Activated CD4-positive, alpha-beta T cell treated with anti-CD3 and anti-CD28 coated beads, Interleukin-2, amount 10 ng/mL, durations not matched to agents 7 days and 5 days (primary cell): ENCODE measurements at regions of chr4 and their contacts with region 1.

Region 1: GRCh38 chr4:54233277-54233696 is 4.2 kb downstream of the PDGFRA start:
- DNase-seq: peak; percentile 74
- H3K4me3 Mint-ChIP-seq: peak overlapping the region; percentile 53
- H3K27ac Mint-ChIP-seq: no peak overlapping the region
- H3K4me1 Mint-ChIP-seq: peaks cover 19% of the 10 kb centered on the region
- H3K27me3 Mint-ChIP-seq: peaks cover 67% of the 10 kb centered on the region

Region 2: DNA sequence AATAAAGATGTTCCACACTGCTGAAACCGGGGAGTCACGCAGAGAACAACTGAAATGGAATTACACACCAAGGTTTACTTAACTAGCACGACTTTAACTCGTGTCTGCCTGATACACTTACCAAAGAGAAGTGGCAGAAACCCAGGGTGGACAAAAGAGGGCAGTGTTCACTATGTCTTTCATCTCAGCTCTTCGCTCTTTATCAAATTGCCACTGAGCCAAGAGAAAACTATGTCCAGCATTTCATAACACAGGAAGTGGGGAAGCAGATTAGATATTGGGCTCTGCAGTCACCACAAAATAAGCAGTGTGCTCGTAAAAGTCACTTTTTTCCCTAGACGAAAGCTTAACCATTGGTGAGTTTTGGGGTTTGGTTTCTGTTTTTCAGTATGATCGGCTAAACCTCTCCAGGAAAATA is 324.6 kb before region 1 on chr4:
- CTCF ChIA-PET with region 1: interaction called, 23 read pairs
- POLR2A ChIA-PET with region 1: no interaction called
- DNase-seq: peak; percentile 33
- H3K4me3 Mint-ChIP-seq: no peak overlapping the region
- H3K27ac Mint-ChIP-seq: no peak overlapping the region
- H3K4me1 Mint-ChIP-seq: peaks cover 9% of the 10 kb centered on the region
- H3K27me3 Mint-ChIP-seq: peaks cover 38% of the 10 kb centered on the region

Region 3: DNA sequence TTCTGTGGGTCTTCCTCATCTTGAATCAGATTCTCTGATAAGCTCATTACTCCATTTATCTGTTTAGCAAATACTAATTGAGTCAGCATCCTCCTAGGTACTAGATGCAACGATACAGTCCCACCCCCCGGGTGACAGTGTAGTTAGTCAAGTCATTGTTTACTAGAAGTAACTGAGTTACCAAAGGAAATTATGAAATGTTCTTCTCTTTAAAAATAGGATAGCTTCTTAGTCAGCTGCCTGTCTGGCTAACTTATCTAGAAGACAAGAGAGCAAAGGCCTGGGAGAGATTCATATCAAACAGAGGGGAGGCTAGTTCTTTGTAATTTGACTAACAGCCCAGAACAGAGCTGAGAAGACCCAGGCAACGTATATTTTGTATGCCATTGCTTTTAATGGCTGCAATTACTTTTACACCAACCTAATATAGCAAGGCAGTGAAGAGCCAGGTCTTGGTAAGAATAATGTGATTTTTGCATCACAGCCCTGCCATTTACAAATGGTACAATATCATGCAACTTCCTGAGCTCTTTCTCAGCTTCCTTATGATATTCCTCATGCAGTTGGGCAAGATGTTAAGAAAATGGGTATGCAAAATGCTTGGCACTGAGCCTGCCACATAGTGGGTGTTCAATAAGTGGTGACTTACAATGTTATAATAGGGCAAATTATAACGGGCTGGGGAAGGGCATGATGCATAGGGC is 318.8 kb before region 1 on chr4:
- CTCF ChIA-PET with region 1: interaction called, 23 read pairs
- POLR2A ChIA-PET with region 1: no interaction called
- DNase-seq: no peak
- H3K4me3 Mint-ChIP-seq: no peak overlapping the region
- H3K27ac Mint-ChIP-seq: no peak overlapping the region
- H3K4me1 Mint-ChIP-seq: no peaks in the 10 kb centered on the region
- H3K27me3 Mint-ChIP-seq: peaks cover 10% of the 10 kb centered on the region

Region 4: DNA sequence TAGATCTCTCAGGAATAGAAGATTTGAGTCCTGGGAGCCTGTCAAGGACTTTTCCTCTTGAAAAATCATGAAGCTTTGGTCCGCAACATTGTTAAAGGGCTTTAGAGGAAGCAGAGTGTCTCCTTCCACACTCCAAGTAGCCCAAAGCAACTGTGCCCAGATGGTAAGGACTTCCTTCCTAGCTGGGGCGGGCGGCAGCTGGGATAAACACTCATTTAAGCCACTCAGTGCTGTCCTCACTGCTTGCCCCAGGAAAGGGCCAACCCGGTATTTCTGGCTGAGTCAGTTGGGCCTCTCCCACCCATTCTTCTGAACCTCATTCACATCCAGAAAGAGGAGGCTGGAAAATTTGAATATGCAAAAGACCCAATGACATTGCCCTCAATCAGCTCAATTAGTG is 313.2 kb before region 1 on chr4:
- CTCF ChIA-PET with region 1: interaction called, 16 read pairs
- POLR2A ChIA-PET with region 1: no interaction called
- DNase-seq: no peak
- H3K4me3 Mint-ChIP-seq: no peak overlapping the region
- H3K27ac Mint-ChIP-seq: no peak overlapping the region
- H3K4me1 Mint-ChIP-seq: no peaks in the 10 kb centered on the region
- H3K27me3 Mint-ChIP-seq: peaks cover 12% of the 10 kb centered on the region